Ascending aorta (tissue), 2 donors: ENCODE measurements at regions of chr16 and their contacts with region 1.

Region 1: DNA sequence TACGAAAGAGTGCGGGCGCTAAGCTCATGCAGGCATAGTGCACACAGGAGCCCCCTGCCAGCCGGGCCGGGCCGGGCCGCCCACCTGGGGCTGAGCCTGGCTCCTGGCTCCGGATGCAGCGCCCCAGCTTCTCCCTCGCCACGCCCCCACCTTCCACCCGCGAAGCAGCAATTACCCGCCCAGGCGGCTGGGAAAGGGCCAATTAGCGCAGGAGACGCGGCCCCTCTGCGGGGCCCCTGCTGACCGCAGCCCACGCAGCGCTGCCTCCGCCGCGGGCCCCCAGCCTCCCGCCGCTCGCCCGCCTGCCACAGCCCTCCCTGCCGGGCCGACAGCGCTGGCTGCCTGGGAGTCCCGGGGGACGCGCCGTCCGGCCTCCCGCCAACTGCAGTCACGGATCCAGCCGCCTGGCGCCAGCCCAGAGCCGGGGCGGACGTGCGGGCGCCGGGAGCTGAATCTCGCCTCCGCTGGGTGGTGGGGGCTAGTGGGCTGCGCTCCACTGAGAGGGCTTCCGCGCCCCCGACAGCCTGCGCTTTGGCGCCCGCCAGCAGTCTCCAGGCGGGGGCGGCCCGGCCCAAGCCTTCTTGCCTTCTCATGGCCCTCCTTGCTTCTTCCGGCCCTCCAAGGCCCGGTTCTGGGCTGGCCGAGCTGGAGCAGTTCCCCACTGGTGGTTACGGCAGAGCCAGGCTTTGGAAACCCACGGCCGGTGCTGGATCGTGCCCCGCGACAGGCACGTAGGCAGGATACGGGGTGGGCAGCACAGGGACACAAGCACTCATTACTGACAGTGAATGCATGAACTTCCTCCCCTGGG is 14.9 kb upstream of the CBFB start:
- DNase-seq: peak in 1 of 2 donors; percentile 91
- H3K4me3 ChIP-seq: peak overlapping the region; percentile 76 to 77
- H3K27ac ChIP-seq: peak overlapping the region; percentile 77 to 83
- H3K4me1 ChIP-seq: peaks cover 0 to 15% of the 10 kb centered on the region in 2 donors
- H3K27me3 ChIP-seq: no peaks in the 10 kb centered on the region
- CTCF ChIP-seq: peak; percentile 11 to 28 (median 24)

Region 2: DNA sequence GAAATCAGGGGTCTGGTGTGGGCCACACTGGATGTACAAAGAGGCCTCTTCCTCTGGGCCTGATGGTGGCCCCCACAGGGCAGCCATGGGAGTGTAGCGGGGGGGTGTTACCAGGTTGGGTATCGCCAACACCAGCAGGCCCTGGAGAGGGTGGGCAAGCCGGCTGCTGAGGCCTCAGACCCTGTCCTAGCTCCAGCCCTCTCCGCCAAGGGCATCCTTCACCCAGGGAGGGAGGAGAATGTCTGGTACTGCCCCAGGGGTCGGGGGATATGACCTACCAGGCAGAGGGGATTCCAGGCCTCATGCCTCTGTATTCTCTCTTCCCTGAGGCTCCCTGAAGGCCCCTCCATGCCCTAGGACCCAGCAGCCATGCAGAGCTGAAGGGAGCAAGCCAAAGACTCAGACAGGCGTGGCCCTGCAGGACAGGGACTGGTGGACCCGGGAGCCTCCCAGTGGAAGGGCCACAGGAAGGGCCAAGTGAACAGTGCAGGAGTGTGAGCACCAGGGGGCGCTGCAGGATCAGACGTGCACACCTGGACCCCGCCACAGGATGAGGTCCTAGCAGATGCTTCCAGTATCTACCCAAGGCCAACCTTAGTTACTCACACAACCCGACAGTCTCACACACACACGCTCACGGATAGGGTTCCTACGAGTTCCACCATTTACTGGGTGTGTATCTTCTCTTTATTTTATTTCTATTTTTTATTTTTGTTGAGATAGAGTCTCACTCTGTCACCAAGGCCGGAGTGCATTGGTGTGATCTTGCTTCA is 36.5 kb before region 1 on chr16:
- intact Hi-C with region 1: loop called (anchors 2 kb)
- DNase-seq: peak; percentile 35 to 92
- H3K4me3 ChIP-seq: no peak overlapping the region
- H3K27ac ChIP-seq: no peak overlapping the region
- H3K4me1 ChIP-seq: peaks cover 0 to 7% of the 10 kb centered on the region in 2 donors
- H3K27me3 ChIP-seq: no peaks in the 10 kb centered on the region
- CTCF ChIP-seq: peak; percentile 95 to 99 (median 97)

Region 3: GRCh38 chr16:67000384-67001351 is 13.4 kb before region 1 on chr16:
- intact Hi-C with region 1: loop called (anchors 1 kb)
- DNase-seq: peak; percentile 33 to 83
- H3K4me3 ChIP-seq: peak overlapping the region; percentile 54 to 65
- H3K27ac ChIP-seq: peak overlapping the region; percentile 65 to 72
- H3K4me1 ChIP-seq: peaks cover 4 to 27% of the 10 kb centered on the region in 2 donors
- H3K27me3 ChIP-seq: no peaks in the 10 kb centered on the region
- CTCF ChIP-seq: no peak

Region 4: DNA sequence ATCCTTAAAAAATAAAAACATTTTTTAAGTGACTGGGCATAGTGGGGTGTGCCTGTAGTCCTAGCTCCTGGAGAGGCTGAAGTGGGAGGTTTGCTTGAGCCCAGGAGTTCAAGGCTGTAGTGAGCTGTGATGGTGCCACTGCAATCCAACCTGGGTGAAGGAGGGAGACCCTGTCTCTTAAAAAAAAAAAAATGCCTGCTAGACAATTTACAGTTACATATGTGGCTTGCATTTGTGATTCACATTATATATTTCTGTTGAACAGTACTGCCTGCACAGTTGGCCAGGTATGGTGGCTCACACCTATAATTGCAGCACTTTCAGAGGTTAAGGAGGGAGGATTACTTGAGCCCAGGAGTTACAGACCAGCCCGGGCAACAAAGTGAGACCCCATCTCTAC is 38.4 kb after region 1 on chr16:
- intact Hi-C with region 1: no loop called
- DNase-seq: no peak
- H3K4me3 ChIP-seq: no peak overlapping the region
- H3K27ac ChIP-seq: no peak overlapping the region
- H3K4me1 ChIP-seq: no peaks in the 10 kb centered on the region
- H3K27me3 ChIP-seq: no peaks in the 10 kb centered on the region
- CTCF ChIP-seq: no peak

Region 5: GRCh38 chr16:67296422-67296821 is 282.4 kb after region 1 on chr16:
- intact Hi-C with region 1: no loop called
- DNase-seq: no peak
- H3K4me3 ChIP-seq: no peak overlapping the region
- H3K27ac ChIP-seq: no peak overlapping the region
- H3K4me1 ChIP-seq: peaks cover 0 to under 1% of the 10 kb centered on the region in 2 donors
- H3K27me3 ChIP-seq: no peaks in the 10 kb centered on the region
- CTCF ChIP-seq: no peak